B cell (primary cell): ENCODE measurements at regions of chr17 and their contacts with region 1.

Region 1: DNA sequence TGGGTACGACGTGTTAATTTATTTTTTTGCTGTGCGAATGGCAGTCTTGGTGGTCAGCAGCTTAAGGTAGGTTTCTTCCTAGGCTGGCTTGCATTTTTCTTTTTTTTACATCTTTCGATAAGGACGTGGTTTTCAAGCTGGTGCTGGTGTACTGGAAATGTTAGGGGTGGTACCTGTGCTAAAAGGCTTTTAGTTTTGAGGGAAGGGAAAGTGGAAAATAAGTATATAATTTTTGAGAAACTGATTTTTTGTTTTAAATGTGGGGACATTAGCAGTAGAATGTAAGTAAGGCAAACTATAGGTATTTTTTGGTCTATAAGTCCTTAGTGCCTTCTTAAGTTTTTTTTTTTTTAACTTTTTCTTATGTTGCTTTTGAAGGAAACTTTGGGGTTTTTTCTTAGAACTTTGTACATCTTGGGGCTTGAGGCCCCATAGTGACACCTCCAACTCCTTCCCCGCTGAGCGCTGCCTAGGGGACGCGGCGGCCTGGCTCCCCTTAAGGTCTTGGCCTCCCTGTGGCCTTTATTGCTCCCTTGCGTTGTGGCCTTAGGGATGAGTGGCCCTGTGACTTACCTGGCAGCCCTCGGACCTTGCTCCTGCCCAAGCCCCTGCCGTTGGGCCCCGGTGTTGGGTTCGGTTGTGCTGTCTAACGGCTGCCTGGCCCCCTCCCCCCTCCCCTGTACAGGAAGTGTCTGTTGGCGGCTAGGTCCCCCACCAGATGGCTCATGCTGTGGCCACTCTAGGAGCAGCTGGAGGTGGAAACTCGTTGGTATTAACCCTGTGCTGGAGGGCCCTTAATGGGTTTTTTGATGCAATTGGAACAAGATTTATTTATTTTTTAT is 88.0 kb upstream of the RPRML start:
- DNase-seq: peak; percentile 91
- ATAC-seq: peak; percentile 99
- H3K4me3 ChIP-seq: peak overlapping the region; percentile 65 to 95 (median 90)
- H3K4me3 Mint-ChIP-seq: peak overlapping the region; percentile 98
- H3K27ac ChIP-seq: peak overlapping the region; percentile 75 to 93
- H3K27ac Mint-ChIP-seq: peak overlapping the region; percentile 97
- H3K4me1 ChIP-seq: peaks cover 11 to 12% of the 10 kb centered on the region in 2 donors
- H3K4me1 Mint-ChIP-seq: peaks cover 36% of the 10 kb centered on the region
- H3K27me3 ChIP-seq: no peaks in the 10 kb centered on the region
- H3K27me3 Mint-ChIP-seq: no peaks in the 10 kb centered on the region
- CTCF ChIP-seq: no peak

Region 2: DNA sequence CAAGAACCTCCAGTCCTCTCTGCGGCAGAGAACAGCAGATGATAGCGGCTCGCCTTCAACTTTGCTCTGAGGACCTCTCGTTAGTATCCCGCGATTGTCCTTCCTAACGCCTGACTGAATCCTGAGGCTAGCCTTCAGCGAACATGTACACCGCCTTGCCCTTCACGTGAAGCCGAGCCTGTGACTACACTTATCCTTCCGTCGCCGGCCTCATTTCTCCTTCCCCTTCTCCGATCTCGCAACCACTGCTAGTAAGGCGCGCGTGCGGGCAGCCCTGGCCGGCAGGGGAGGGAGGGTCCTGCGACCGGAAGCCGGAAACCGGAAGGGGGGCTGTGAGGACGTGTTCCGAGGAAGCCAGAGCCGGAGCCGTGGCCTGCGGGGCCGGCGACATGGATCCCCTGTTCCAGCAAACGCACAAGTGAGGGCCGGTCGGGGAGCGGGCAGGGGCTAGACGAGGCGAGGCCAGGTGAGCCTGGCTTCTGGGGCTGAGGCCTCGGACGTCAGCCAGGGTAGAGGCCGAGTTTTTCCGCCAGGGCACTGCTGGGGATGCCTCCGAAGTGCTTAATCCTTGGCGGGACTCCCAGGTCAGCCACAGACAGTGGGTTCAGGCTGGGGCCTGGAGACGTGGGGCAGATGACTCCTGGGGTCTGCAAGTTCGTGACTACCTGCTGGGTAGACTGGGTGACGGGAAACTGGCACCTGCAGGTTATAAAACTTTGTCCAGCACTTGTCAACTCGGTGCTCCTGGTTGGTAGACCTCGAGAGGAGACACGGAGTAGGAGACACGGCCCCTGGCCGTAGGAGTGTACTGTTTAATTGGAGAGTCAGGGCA is 144.0 kb before region 1 on chr17 and contains the start of gene GOSR2:
- CTCF ChIA-PET with region 1: no interaction called
- POLR2A ChIA-PET with region 1: no interaction called
- intact Hi-C with region 1: loop called (anchors 1 kb)
- DNase-seq: peak; percentile 98
- ATAC-seq: peak; percentile 94
- H3K4me3 ChIP-seq: peak within 1 kb of the TSS; percentile 87 to 98 (median 97)
- H3K4me3 Mint-ChIP-seq: peak within 1 kb of the TSS; percentile 98
- H3K27ac ChIP-seq: peak within 1 kb of the TSS; percentile 94 to 98
- H3K27ac Mint-ChIP-seq: peak within 1 kb of the TSS; percentile 100
- H3K4me1 ChIP-seq: peaks cover 16% of the 10 kb centered on the region in 2 donors
- H3K4me1 Mint-ChIP-seq: peaks cover 55% of the 10 kb centered on the region
- H3K27me3 ChIP-seq: no peaks in the 10 kb centered on the region
- H3K27me3 Mint-ChIP-seq: no peaks in the 10 kb centered on the region
- CTCF ChIP-seq: no peak
- total RNA-seq, gene GOSR2: 91.0 and 95.2 TPM in 2 replicates

Region 3: GRCh38 chr17:46995841-46996571 is 71.1 kb before region 1 on chr17:
- CTCF ChIA-PET with region 1: no interaction called
- POLR2A ChIA-PET with region 1: no interaction called
- intact Hi-C with region 1: loop called (anchors 1 kb)
- DNase-seq: no peak
- ATAC-seq: no peak
- H3K4me3 ChIP-seq: no peak overlapping the region
- H3K4me3 Mint-ChIP-seq: no peak overlapping the region
- H3K27ac ChIP-seq: no peak overlapping the region
- H3K27ac Mint-ChIP-seq: no peak overlapping the region
- H3K4me1 ChIP-seq: peaks cover 23 to 40% of the 10 kb centered on the region in 2 donors
- H3K4me1 Mint-ChIP-seq: peaks cover 34% of the 10 kb centered on the region
- H3K27me3 ChIP-seq: no peaks in the 10 kb centered on the region
- H3K27me3 Mint-ChIP-seq: no peaks in the 10 kb centered on the region
- CTCF ChIP-seq: no peak

Region 4: DNA sequence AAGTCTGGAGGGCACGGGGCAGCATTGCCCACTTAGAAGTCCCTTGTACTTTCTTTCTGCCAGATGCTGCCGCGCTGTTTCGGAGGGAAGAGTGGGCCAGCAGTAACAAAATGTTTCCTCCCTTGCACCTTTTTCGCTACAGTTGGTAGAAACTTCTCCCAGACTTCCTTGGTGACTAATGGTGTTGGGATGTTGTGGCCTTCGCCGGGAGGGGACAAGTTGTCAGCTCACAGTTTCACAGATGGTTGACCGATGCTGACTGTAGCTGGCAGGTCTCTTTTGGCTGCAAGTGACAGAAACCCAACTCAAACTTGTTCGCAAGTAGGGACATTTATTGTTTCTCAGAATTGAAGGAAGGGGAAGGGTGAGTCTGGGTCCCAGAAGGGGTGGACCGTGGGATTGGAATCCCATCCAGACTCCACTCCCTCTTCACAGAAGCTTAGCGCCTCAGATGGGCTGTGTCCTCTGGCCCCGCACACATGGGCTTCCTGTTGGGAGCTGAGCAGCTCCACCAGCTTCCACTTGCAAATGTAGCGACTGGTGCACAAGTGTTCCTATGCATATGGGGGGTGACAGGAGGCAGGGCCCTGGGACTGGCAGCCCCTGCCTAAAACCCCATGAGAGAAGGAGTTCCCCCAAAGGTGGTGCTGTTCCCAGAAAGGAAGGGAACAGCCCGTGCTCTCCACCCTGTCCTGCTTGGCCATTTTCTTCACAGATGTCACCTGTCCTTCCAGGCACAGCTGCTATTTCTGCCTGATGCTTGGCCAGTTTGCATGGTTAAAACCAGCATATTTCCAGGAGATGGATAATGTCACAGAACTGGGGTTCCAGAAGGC is 57.1 kb before region 1 on chr17:
- CTCF ChIA-PET with region 1: no interaction called
- POLR2A ChIA-PET with region 1: no interaction called
- intact Hi-C with region 1: no loop called
- DNase-seq: no peak
- ATAC-seq: no peak
- H3K4me3 ChIP-seq: no peak overlapping the region
- H3K4me3 Mint-ChIP-seq: no peak overlapping the region
- H3K27ac ChIP-seq: no peak overlapping the region
- H3K27ac Mint-ChIP-seq: no peak overlapping the region
- H3K4me1 ChIP-seq: peaks cover 3 to 8% of the 10 kb centered on the region in 2 donors
- H3K4me1 Mint-ChIP-seq: peaks cover 17% of the 10 kb centered on the region
- H3K27me3 ChIP-seq: no peaks in the 10 kb centered on the region
- H3K27me3 Mint-ChIP-seq: no peaks in the 10 kb centered on the region
- CTCF ChIP-seq: no peak

Region 5: GRCh38 chr17:47099987-47100711 is 33.1 kb after region 1 on chr17:
- CTCF ChIA-PET with region 1: no interaction called
- POLR2A ChIA-PET with region 1: no interaction called
- intact Hi-C with region 1: loop called (anchors 1 kb)
- DNase-seq: peak; percentile 89
- ATAC-seq: peak; percentile 97
- H3K4me3 ChIP-seq: peak overlapping the region; percentile 25 to 89 (median 78)
- H3K4me3 Mint-ChIP-seq: peak overlapping the region; percentile 99
- H3K27ac ChIP-seq: peak overlapping the region; percentile 59 to 86
- H3K27ac Mint-ChIP-seq: peak overlapping the region; percentile 100
- H3K4me1 ChIP-seq: peaks cover 13 to 33% of the 10 kb centered on the region in 2 donors
- H3K4me1 Mint-ChIP-seq: peaks cover 33% of the 10 kb centered on the region
- H3K27me3 ChIP-seq: no peaks in the 10 kb centered on the region
- H3K27me3 Mint-ChIP-seq: no peaks in the 10 kb centered on the region
- CTCF ChIP-seq: no peak

Region 6: DNA sequence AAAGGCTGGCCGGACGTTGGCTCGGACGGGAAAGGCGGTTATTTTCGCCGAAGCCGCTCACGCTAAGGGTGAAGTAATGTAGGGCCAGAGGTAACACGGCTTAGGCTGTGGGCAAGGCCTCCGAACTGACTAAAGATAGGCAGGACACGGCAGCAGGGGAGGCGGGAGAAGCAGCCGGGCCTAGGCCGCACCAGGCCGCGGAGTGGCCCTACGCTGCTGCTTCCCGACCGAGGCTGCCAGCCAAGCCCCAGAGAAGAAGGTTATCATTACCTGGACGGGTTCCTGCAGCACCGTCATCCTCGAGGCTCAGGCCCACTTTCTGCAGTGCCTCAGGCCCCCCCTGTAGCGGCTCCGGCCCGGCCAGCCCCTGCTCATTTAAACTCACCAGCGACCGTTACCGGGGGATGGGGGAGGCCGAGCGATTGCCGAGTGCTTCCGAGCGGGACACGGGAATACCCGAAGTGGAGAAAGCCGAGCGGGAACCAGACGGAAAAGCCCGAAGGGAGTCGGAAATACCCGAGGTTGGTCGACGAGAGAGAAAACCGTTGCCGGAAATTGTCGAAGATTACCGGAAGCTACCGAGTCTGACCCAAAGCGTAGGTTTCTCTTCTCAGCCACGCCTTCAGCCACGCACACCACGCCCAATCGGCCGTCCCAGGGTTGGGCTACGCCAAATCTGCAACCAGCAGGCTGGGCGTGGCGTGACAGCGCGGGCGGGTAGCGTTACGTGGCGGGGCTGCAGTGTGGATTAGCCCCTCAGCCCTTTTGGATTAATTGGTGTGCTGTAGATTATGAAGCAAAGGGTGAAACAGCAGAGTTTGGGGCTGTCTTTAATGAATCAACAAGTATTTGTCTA is 122.0 kb after region 1 on chr17 and contains the start of gene CDC27:
- CTCF ChIA-PET with region 1: no interaction called
- POLR2A ChIA-PET with region 1: no interaction called
- intact Hi-C with region 1: loop called (anchors 10 kb)
- DNase-seq: peak; percentile 100
- ATAC-seq: peak; percentile 90
- H3K4me3 ChIP-seq: peak within 1 kb of the TSS; percentile 74 to 99 (median 88)
- H3K4me3 Mint-ChIP-seq: peak within 1 kb of the TSS; percentile 96
- H3K27ac ChIP-seq: peak within 1 kb of the TSS; percentile 92 to 95
- H3K27ac Mint-ChIP-seq: peak within 1 kb of the TSS; percentile 95
- H3K4me1 ChIP-seq: peaks cover 21 to 30% of the 10 kb centered on the region in 2 donors
- H3K4me1 Mint-ChIP-seq: peaks cover 53% of the 10 kb centered on the region
- H3K27me3 ChIP-seq: no peaks in the 10 kb centered on the region
- H3K27me3 Mint-ChIP-seq: no peaks in the 10 kb centered on the region
- CTCF ChIP-seq: no peak
- total RNA-seq, gene CDC27: 86.5 and 90.7 TPM in 2 replicates

Region 7: GRCh38 chr17:47295062-47295845 is 228.2 kb after region 1 on chr17:
- CTCF ChIA-PET with region 1: no interaction called
- POLR2A ChIA-PET with region 1: no interaction called
- intact Hi-C with region 1: no loop called
- DNase-seq: no peak
- ATAC-seq: no peak
- H3K4me3 ChIP-seq: no peak overlapping the region
- H3K4me3 Mint-ChIP-seq: peak overlapping the region; percentile 63
- H3K27ac ChIP-seq: peak overlapping the region in 1 of 2 donors; percentile 70
- H3K27ac Mint-ChIP-seq: peak overlapping the region; percentile 72
- H3K4me1 ChIP-seq: peaks cover 23 to 27% of the 10 kb centered on the region in 2 donors
- H3K4me1 Mint-ChIP-seq: peaks cover 26% of the 10 kb centered on the region
- H3K27me3 ChIP-seq: no peaks in the 10 kb centered on the region
- H3K27me3 Mint-ChIP-seq: no peaks in the 10 kb centered on the region
- CTCF ChIP-seq: no peak

Region 8: GRCh38 chr17:47368262-47368661 is 301.2 kb after region 1 on chr17:
- CTCF ChIA-PET with region 1: no interaction called
- POLR2A ChIA-PET with region 1: no interaction called
- intact Hi-C with region 1: no loop called
- DNase-seq: no peak
- ATAC-seq: no peak
- H3K4me3 ChIP-seq: no peak overlapping the region
- H3K4me3 Mint-ChIP-seq: no peak overlapping the region
- H3K27ac ChIP-seq: no peak overlapping the region
- H3K27ac Mint-ChIP-seq: no peak overlapping the region
- H3K4me1 ChIP-seq: no peaks in the 10 kb centered on the region
- H3K4me1 Mint-ChIP-seq: no peaks in the 10 kb centered on the region
- H3K27me3 ChIP-seq: no peaks in the 10 kb centered on the region
- H3K27me3 Mint-ChIP-seq: no peaks in the 10 kb centered on the region
- CTCF ChIP-seq: no peak